GM23248 (cell line): ENCODE measurements at regions of chr6 and their contacts with region 1.

Region 1: DNA sequence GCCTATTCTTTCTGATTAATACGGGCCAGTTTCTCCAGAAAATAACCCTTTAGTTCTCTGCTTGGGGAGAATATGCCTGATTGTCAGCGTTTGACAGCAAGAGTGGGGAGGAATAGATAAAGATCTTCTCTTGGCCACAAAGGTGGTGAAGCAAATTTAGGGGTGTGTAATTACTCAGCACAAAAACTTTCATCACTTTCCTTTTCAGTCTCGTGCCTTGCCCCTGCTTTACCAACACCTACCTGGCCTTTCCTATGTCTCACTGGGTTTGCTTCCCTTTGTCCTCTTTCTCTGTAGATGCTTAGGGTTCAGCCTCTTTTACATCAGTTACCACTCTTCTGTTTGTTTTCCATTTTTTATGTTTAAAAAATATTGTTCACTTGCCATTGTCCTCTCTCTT is 99.2 kb downstream of the MCHR2 start:
- DNase-seq: no peak
- H3K4me3 ChIP-seq: no peak overlapping the region
- H3K27ac ChIP-seq: no peak overlapping the region
- H3K4me1 ChIP-seq: no peaks in the 10 kb centered on the region
- H3K27me3 ChIP-seq: peaks cover 14% of the 10 kb centered on the region

Region 2: DNA sequence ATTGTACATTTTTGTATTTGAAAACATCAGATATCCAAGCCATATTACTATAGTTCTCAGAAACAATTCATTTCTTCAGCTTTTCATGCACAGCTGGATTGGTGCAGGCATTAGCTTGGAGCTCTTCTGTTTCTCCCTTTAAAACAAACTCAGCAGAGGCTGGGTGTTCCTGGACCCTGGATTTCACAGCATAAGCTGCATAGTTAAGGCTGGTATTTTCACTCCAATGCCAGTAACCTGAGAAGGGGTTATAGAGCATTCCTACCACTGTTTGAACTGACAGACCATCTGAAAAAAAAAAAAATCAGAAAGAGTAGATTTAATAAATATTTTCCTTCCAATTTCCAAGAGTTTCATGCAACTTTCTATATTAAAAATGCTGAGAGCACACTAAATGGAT is 525.3 kb before region 1 on chr6:
- in situ Hi-C with region 1: no loop called
- DNase-seq: no peak
- H3K4me3 ChIP-seq: no peak overlapping the region
- H3K27ac ChIP-seq: no peak overlapping the region
- H3K4me1 ChIP-seq: no peaks in the 10 kb centered on the region
- H3K27me3 ChIP-seq: no peaks in the 10 kb centered on the region

Region 3: DNA sequence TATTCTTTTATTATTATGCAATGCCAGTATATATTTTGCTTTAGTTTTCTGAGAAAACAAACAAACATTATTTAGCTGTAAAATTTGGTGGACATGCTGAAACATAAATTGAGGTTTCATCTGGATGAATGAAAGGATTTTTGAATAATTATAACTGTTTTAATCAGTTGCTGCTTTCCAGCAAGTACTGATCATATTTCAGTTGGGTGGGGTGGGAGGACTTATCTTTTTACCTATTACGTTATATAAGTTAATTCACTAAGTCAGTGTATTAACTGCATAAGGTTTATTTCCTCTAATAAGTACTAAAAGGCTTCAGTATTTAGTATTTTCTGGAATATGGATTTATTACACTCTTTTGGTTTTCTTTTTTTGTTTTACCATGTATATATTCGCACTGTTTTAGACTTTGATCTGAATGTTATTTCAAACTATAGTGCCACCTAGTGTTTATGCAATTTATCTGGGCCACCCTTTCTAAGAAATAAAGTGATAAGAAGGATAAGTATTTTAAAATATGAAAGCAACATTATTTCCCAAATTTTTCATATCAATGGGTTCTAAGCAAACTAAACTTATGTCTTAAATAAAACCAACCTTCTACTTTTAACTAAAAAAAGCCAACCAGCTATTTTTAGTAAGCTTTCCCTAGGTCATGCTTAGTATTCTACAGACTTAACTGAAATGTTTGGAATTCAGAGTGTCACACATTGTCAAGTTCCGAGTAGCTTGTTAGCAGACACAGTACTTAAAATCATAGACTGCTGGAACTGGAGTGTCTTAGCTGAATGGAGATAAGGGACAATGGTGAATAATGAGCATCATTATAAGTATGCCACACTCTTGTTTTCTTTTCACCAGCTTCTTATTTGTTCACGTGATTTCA is 204.6 kb after region 1 on chr6:
- in situ Hi-C with region 1: loop called (anchors 10 kb)
- DNase-seq: peak; percentile 67
- H3K4me3 ChIP-seq: no peak overlapping the region
- H3K27ac ChIP-seq: no peak overlapping the region
- H3K4me1 ChIP-seq: peaks cover 14% of the 10 kb centered on the region
- H3K27me3 ChIP-seq: no peaks in the 10 kb centered on the region